Activated B cell treated with CpG ODN at 0.5 μM for 24 hours (primary cell): ENCODE measurements at regions of chr7 and their contacts with region 1.

Region 1: DNA sequence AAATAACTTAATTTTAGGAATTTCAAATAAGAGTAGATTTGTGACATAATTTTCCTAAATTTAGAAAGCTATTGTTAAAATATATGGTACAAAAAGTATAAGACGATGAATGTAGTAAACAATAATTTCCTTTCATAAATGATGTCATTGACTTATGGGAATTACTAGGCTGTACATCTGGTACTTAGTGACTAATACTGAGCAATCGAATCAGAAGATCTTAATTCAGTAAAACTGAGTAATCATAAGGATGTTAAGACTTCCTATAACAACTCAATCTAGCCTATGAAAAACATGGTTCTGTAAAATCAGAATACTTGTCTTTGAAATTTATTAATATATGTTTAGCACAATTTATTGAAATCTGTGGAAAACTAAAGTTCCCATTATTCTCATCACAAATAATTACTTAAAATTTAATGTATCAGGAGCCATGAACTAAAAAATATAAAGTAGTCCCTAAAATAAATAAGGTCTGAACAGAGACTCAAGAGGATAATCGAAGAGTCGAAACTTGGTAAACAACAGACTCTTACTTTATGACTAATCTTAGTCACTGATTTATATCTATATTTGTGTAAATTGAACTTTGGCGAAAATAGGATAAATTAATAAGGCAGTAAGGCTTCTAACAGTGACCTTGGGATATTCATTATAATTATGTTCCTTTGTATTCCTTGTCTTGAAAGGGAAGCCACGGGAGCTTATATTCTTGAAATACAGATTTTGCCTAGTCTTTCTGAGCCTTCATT is 142.1 kb downstream of the HGF start:
- DNase-seq: no peak
- ATAC-seq: no peak
- H3K4me3 Mint-ChIP-seq: no peak overlapping the region
- H3K27ac Mint-ChIP-seq: no peak overlapping the region
- H3K4me1 Mint-ChIP-seq: no peaks in the 10 kb centered on the region
- H3K27me3 Mint-ChIP-seq: no peaks in the 10 kb centered on the region
- CTCF ChIP-seq: no peak

Region 2: DNA sequence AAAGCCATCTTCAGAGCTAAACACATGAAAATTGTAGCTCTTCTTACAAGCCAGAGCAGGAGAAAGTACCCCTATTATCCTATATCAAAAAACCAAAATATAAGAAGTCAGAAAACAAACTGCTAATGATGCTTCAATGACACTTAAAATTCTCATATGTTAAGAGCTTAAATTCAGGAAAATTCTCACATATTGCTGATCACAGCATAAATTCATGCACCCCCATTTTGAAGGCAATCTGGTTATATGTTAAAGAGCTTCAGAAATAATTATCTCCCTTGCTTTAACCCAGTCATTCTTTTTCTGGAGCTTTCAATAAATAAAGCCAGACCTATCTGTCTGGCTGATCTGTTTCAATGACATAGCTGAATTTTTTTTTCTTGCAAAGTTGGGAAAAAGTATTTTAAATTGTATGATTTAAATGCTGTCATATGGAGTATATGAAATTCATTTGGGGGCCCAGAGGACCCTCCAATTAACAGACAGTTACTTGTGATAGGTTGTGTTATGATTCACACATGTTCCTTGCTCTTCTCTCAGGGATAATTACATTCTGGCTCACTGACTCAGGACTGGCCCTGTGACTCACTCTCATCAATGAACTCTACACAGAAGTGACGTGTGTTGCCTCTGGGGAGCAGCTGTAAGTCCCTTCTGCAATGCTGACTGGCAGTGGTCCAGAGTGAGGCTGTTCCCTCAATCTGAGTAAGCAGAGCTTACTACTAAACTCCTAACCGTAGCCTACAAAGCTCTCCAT is 57.0 kb after region 1 on chr7:
- CTCF ChIA-PET with region 1: no interaction called
- POLR2A ChIA-PET with region 1: no interaction called
- intact Hi-C with region 1: loop called (anchors 10 kb)
- DNase-seq: no peak
- ATAC-seq: peak; percentile 68
- H3K4me3 Mint-ChIP-seq: no peak overlapping the region
- H3K27ac Mint-ChIP-seq: no peak overlapping the region
- H3K4me1 Mint-ChIP-seq: no peaks in the 10 kb centered on the region
- H3K27me3 Mint-ChIP-seq: no peaks in the 10 kb centered on the region
- CTCF ChIP-seq: no peak